ENCODE measurements at regions of chr12 and their contacts with region 1.

Region 1: DNA sequence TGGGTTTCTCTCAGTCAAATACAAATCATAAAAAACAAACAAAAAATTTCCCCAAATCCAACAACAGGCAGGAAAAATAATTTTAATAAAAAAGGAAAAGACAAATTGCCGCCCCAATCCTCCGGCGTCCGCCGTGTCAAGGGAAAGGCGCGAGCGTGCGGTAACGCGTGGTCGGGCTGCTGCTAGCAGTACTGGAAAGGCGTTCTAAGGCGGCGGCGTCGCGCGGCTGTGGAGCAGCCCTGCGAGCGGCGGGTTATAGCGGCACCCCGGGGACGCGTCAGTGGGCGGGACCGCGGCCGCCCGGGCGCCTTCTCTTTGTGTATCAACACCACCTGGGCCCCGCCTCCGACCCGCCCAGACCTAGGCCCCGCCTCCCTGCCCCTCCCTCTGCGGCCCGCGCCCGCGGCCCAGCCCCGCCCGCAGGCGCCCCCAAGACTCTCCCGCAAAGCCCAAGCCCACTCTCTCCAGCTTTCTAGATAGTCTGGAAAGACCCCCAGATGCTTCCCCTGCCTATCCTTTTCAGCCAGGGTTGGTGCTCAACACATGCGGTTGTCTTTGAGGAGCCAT is at the start of gene SLC38A2:
- DNase-seq: peak; percentile 96 to 100 (median 98)

Region 2: DNA sequence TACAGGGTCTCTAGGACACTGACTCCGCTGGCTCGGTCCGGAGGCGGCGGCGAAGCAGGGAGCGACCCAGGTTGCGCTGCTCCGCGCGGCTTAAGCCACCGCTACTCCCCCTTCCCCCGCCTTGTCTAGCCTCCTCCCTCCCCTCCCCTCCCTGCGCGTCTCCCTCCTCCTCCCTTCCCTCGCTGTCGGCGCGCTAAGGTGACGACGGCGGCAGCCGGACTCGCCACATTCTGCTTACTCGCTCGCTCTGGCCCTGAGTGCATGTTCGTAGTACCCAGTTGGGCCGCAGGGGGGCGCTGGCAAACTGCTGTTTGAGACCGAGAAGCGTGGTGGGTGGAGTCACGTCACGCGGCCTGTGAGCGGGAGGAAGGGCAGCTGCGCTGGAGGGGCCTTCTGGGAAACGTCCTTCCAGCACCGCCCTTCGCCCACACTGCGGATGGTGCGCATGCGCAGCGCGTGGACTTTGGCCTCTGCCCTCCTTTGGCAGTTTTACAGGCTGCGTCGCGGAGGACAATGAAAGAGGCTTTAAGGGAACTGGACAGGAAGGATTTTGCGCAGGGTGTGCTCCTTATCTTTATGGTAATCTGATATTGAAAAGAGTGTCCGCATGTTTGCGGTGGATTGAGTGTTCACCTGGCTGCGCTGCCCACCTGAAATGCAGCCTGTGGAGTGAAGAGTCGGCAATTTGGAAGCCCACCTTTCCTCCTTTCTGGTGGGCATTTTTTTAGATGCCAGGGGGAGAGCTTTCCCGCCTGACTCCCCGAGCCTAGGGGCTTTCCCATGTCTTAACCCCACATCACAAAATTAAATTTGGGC is 382.0 kb before region 1 on chr12 and contains the start of gene SCAF11:
- intact Hi-C with region 1: loop called (anchors 5 kb)
- DNase-seq: peak; percentile 98 to 100 (median 100)

Region 3: DNA sequence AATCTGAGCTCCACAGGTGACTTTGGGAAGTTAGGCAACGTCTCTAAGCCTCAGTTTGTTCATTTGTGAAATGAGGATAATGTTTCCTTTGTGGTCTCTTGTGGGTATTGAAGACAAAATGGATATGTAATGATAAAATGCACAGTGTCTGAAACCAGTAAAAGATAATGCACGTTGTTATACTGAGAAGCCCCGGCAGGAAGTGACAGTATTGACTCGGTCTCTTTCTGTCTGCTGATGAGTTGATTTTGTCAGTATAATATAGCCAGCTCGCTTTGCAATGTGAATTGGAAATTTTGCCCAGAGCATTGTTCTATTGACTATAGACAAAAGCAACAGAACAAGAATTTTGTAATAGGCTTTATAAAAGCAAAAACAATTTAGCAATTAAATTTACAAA is 54.6 kb before region 1 on chr12:
- intact Hi-C with region 1: no loop called
- DNase-seq: no peak